Heart left ventricle (tissue), 16 donors: ENCODE measurements at regions of chrX and their contacts with region 1.

Region 1: GRCh38 chrX:37349221-37350064 is at the start of gene PRRG1:
- DNase-seq: peak; percentile 75 to 89 (median 86)
- ATAC-seq: peak; percentile 95 to 97 (median 96)
- H3K4me3 ChIP-seq: peak within 1 kb of the TSS; percentile 45 to 83 (median 69)
- H3K27ac ChIP-seq: peak within 1 kb of the TSS; percentile 68 to 89 (median 83)
- H3K4me1 ChIP-seq: peaks cover 0 to 22% (median 2%) of the 10 kb centered on the region in 12 donors
- H3K27me3 ChIP-seq: peaks cover 0 to 30% (median 0%) of the 10 kb centered on the region in 9 donors
- CTCF ChIP-seq: no peak
- POLR2A ChIP-seq: peak in 1 of 2 donors; percentile 54
- total RNA-seq, gene PRRG1: 7.2 to 17.3 (median 10.2) TPM

Region 2: DNA sequence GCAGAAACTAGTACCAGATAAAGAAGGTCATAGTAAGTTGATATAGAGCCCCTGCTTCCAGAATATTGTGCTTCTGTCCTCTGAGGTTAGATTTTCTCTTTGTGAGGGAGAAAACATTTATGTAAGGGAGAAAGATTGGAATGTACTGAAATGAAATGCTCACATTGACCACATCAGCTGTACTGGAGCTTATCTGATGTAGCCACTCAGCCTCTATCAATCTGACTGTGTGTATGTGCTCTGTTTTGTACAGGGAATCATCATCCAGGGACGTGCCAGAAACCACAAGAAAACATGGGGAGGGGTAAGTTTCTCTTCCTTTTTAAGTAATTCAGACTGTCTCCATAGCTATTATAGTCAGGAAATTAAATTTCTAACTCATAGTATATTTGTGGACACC is 56.5 kb after region 1 on chrX:
- intact Hi-C with region 1: loop called in 1 of 10 experiments (anchors 10 kb)
- DNase-seq: no peak
- ATAC-seq: peak in 2 of 4 donors; percentile 26 to 31
- H3K4me3 ChIP-seq: no peak overlapping the region
- H3K27ac ChIP-seq: peak overlapping the region in 1 of 12 donors; percentile 2
- H3K4me1 ChIP-seq: peaks cover 0 to 11% (median 0%) of the 10 kb centered on the region in 12 donors
- H3K27me3 ChIP-seq: no peaks in the 10 kb centered on the region
- CTCF ChIP-seq: no peak
- POLR2A ChIP-seq: no peak

Region 3: DNA sequence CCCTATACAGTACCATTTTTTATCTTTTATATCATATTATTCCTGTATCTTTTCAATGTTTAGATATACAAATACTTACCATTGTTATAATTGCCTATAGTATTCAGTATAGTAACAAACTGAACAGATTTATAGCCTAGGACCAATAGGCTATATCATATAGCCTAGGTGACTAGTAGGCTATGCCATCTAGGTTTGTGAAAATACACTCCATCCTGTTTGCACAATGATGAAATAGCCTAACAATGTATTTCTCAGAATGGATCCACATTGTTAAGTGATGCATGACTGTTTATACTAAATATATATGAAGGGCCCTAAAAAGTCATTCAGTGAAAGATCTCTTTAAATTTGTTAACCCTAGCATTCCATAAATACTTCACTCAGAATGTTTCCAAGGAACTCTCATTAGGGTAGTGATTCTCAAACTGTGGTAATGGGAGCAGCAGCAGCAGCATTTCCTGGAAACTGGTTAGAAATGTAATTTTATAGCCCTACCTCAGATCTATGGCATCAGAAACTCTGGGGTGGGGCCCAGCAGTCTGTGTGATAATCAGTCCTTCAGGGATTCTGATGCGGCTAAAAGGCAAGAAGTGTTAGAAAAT is 74.5 kb after region 1 on chrX:
- intact Hi-C with region 1: loop called in 2 of 10 experiments (anchors 5 to 10 kb)
- DNase-seq: no peak
- ATAC-seq: no peak
- H3K4me3 ChIP-seq: no peak overlapping the region
- H3K27ac ChIP-seq: peak overlapping the region in 3 of 12 donors; percentile 14 to 48 (median 19)
- H3K4me1 ChIP-seq: peaks cover 0 to 8% (median 0%) of the 10 kb centered on the region in 12 donors
- H3K27me3 ChIP-seq: peaks cover 0 to 5% (median 0%) of the 10 kb centered on the region in 9 donors
- CTCF ChIP-seq: no peak
- POLR2A ChIP-seq: no peak

Region 4: DNA sequence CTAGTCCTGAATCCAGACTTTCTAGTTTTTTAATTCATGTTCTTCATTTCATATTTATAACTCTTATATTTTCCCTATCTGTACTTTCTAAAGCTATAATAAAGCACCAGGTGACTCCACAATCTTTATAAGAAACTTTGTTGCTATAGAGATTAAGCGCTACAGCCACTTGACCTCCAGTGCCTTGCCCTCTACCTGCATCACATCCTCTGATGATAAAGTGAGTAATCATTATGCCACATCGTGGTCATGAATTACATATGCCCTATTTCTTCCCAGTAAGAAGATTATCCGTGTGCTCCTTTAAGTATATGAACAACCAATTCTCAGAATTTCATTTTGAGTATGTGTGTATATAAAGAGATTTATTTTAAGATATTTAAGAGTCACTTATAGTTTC is 504.7 kb after region 1 on chrX:
- intact Hi-C with region 1: no loop called
- DNase-seq: no peak
- ATAC-seq: no peak
- H3K4me3 ChIP-seq: no peak overlapping the region
- H3K27ac ChIP-seq: no peak overlapping the region
- H3K4me1 ChIP-seq: no peaks in the 10 kb centered on the region
- H3K27me3 ChIP-seq: no peaks in the 10 kb centered on the region
- CTCF ChIP-seq: no peak
- POLR2A ChIP-seq: no peak

Region 5: DNA sequence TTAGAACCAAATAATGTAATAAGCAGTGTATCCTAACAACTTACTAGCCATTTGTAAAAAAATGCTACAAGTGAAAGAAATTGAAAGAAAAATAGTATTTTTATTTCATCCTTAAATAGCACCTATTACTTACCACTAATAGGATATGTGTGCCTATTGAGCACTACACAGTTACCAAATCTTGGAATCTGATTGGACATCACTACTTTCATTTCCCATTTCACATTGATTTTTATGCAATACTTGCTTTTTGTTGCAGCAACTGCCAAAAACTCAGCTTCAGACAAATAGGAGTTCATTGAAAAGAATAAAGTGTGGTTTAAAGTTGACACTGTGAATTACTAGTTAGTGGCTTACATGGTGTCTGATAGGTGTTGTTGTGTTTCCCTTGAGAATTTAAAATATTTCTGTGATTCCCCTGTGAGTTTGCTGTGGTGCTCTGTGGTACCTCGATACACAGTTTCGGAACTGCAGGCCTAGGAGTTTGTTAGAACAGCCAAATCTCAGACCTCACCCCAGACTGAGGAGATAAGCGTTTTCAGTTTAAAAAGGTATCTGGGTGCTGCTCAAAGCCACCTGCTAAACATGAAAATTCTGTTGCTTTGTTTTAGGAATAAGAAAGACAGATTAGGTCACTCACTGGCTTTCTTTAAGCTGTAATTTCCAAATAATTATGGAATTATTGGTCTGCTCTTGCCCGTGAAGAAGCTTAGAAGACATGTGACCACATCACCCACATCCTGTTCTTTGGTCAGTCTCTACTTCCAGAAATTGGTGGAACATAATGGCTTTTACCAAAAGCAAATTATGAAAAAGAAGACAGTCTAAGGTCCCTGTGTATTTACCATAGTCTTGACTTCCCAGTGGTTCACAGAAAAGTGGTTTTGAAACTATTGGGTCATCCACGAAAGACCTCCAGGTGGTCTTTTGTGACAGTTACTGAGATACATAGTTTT is 754.7 kb after region 1 on chrX:
- intact Hi-C with region 1: no loop called
- DNase-seq: no peak
- ATAC-seq: no peak
- H3K4me3 ChIP-seq: no peak overlapping the region
- H3K27ac ChIP-seq: no peak overlapping the region
- H3K4me1 ChIP-seq: no peaks in the 10 kb centered on the region
- H3K27me3 ChIP-seq: no peaks in the 10 kb centered on the region
- CTCF ChIP-seq: no peak
- POLR2A ChIP-seq: no peak